KBM-7 (cell line): ENCODE measurements at regions of chrX and their contacts with region 1.

Region 1: DNA sequence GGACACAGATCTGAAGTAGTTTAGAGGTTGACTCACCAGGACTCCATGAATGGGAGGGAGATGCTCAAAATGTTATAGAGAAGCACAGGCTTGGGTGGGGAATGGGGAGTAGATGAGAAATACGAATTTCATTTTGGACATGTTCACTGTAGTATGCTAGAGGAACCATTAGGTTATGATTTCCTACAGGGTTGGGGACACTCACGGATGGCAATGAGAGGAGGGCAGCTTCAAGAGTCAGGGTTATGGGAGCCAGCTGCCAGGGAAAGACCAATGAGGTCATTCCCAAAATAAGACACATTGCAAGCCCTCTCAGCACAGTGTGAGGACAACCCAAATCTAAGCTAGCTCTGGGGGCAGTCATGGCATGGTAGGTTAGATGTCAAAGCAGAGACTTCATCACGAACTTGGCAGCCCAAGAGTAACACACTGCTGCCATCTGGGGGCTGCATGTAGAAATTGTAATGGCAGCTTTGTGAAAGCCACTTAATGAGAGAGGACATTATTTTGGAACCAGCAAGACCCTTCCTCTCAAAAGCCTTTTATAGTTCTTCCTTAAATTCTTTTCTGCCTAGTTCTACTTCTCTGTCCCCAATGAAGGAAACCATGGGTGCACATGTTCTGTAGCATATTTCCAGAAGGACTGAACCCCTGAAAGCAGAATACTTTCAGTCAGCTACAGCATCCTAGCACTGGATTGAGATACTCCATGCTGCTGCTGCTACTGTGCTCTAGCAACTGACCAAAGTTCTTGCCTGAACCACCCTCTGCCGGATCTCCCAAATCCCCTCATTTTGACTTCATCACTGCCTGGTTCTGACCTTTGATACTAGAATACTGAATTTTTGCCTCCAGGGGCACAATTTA is 16.2 kb upstream of the ZCCHC12 start:
- DNase-seq: peak; percentile 70

Region 2: DNA sequence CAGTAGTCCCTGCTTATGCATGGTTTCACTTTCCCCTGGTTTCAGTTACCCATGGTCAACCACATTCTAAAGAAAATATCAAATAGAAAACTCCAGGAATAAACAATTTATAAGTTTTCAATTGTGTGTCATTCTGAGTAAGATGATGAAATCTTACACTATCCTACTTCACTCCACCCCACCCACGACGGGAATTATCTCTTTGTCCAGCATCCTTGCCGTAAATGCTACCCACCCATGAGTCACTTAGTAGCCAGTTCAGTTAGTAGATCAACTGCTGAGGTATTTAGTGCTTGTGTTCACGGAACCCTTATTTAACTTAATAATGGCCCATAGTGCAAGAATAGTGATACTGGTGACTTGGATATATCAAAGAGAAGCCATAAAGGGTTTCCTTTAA is 782.2 kb before region 1 on chrX:
- in situ Hi-C with region 1: no loop called
- DNase-seq: no peak

Region 3: GRCh38 chrX:118143578-118143977 is 663.8 kb before region 1 on chrX:
- in situ Hi-C with region 1: no loop called
- DNase-seq: no peak

Region 4: DNA sequence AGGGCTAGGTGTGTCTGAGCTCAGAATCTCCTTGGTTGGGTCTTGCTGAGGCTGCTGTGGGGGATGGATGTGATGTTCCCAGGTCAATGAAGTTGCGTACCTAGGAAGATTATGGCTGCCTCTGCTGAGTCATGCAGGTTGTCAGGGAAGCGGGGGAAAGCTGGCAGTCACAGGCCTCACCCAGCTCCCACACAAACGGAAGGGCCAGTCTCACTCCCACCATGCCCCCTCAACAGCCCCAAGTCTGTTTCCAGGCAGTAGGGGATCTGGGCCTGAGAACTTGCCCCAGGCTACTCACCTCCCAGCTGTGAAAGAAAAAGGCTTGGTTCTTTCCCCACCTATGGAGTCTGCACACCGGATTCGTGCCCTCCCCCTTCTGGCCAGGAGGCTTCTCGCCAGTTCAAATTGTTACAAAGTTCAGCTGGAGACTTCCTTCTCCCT is 388.6 kb before region 1 on chrX:
- in situ Hi-C with region 1: no loop called
- DNase-seq: no peak

Region 5: DNA sequence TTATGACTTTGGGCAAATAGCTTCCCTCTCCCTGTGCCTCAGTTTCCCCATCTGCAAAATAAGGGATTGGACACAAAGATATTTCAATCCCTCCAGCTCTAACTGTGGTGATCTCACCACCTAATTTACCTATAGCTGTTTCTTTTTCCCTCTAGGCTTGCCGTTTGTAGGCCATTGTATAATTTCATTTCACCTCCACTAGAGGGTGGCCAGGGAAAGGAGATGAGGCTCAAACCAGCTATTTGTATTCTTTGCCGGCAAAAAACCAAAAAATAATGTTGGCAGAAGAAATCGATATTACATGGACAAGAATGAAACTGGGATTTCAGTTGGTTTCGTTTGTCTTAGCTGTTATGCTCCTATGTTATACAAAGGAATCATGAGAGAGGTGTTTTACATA is 347.9 kb before region 1 on chrX:
- in situ Hi-C with region 1: loop called (anchors 25 kb)
- DNase-seq: peak; percentile 68

Region 6: DNA sequence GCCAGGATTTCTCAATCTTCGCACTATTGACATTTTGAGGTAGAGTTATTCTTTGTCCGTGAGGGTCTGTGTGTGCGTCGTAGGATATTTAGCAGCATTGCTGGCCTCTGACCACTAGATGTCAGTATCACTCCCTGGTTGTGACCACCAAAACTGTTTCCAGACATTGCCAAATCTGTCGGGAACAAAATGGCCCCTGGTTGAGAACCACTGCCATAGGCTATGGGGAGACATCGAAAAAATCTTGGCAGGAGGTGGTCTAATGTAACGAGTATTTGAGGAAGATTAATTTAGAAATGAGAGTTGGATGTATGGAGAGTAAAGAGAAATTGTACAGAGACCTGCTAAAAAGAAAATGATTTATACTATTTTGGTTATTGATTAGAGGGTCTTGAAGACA is 203.4 kb before region 1 on chrX:
- in situ Hi-C with region 1: loop called (anchors 25 kb)
- DNase-seq: peak; percentile 86